A549 (cell line): ENCODE measurements at regions of chr19 and their contacts with region 1.

Region 1: DNA sequence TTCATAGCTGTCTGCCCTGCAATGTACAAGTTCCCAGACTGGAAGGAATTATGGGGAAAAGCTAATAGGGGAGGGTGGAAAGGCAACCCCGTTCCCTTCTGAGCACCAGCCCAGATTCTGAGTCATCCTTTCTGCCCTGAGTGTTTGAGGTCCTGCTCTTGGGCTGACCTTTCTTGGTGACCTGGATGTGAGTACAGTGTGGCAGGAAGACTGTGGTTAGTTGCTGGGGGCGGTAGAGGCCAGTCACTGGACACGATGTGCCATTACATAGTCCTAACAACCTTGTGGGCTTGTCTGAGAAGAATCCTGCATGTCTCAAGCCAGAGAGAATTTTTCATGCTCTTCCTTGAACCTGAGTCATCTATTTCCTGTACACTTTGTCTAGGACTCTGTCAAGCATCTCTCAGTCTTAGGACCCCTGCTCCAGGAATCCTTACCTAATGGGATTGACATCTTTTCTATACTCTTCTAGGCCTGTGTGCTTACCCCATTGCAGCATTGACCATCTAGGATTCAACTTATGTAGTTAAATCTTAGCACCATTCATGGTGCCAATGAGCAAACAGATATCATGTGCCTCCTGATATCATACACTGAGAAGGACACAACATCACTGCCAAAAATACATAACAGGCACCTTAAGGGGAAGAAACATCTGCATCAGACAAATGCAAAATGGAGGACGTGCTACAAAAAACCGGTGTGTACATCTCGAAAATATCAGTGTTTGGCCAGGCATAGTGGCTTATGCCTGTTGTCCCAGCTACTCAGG is 8.1 kb upstream of the ANGPTL4 start:
- DNase-seq: peak in 1 of 2 experiments; percentile 91
- ATAC-seq: peak; percentile 88 to 94
- H3K4me3 ChIP-seq: no peak overlapping the region
- H3K27ac ChIP-seq: peak overlapping the region; percentile 90 to 91
- H3K4me1 ChIP-seq: peaks cover 46% of the 10 kb centered on the region
- CTCF ChIP-seq: no peak
- EP300 ChIP-seq: no peak
- POLR2A ChIP-seq: no peak
- RAD21 ChIP-seq: peak; percentile 19 to 30; a peak in 2 of 5 replicates

Region 2: DNA sequence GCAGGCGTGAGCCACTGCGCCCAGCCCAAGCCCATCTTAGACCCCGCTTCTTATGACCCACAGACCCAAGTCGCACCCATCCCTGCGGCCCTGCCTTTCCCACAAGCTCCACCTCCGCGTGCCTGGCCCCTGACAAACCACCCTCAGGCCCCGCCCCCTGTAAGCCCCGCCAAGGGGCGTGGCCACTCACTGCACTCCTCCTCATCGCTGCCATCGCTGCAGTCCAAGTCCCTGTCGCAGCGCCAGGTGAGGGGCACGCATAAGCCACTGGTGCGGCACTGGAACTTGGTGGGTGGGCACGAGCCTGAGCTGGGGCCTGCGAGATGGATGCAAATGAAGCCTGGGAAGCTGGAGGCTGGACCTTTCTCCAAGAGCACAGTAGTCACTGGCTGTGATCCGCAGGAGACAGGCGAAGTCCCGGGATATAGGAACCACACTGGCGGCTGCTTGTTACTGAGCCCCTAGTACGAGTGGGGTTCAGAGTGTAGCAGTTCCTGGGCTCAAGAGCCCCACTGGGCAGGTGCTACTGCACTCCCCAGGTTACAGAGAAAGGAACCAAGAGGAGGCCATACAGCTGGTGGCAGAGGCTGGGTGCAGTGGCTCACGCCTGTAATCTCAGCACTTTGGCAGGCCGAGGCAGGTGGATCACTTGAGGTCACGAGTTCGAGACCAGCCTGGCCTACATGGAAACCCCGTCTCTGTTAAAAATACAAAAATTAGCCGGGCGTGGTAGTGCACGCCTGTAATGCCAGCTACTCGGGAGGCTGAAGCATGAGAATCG is 50.8 kb before region 1 on chr19:
- CTCF ChIA-PET with region 1: no interaction called
- POLR2A ChIA-PET with region 1: no interaction called
- DNase-seq: no peak
- ATAC-seq: no peak
- H3K4me3 ChIP-seq: no peak overlapping the region
- H3K27ac ChIP-seq: no peak overlapping the region
- H3K4me1 ChIP-seq: peaks cover 20% of the 10 kb centered on the region
- CTCF ChIP-seq: no peak
- EP300 ChIP-seq: no peak
- POLR2A ChIP-seq: no peak
- RAD21 ChIP-seq: no peak

Region 3: GRCh38 chr19:8342684-8343482 is 12.9 kb before region 1 on chr19 and contains the start of gene KANK3:
- CTCF ChIA-PET with region 1: interaction called, 43 read pairs
- POLR2A ChIA-PET with region 1: no interaction called
- DNase-seq: peak; percentile 94 to 97
- ATAC-seq: peak; percentile 99
- H3K4me3 ChIP-seq: peak within 1 kb of the TSS; percentile 44
- H3K27ac ChIP-seq: peak within 1 kb of the TSS; percentile 30 to 80; a peak in 4 of 6 replicates
- H3K4me1 ChIP-seq: peaks cover 4% of the 10 kb centered on the region; the same call in 2 of the 3 replicates
- CTCF ChIP-seq: no peak
- EP300 ChIP-seq: no peak
- POLR2A ChIP-seq: no peak
- RAD21 ChIP-seq: no peak
- polyA plus RNA-seq, gene KANK3: 1.0 and 1.2 TPM in 2 replicates

Region 4: DNA sequence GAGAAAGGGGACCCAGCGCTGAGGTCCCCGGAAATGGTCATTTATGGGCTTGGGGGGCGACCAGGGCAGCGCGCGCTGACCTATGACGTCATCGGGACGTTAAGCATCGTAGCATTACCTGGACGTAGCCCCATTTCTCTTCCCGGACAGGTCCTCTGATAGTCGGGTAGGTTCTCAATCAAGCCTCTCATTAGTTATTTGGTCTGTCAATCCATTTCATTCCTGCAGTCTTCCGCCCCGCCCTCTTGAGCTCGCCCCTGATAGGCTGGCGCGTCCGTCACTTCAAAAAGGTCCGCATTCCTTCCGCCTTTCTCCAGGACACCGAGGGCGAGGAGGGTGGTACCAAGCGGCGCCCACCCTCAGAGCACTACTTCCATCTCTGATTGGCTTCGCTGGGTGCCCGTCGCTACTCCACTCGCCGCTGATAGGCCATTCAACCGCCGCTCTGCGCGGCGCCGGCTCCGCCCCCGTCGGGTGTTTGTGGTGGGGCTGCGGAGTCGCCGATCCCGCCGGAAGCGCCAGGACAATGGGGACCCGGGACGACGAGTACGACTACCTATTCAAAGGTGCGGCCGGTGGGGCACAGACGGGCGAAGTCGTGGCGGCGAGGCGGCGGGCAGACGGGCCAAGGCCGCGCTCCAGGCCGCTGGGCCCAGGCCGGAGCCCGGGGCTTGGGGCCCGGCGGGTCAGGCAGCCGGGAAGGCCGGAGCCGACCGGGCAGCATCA is 34.2 kb after region 1 on chr19 and contains the start of gene RAB11B:
- CTCF ChIA-PET with region 1: interaction called, 71 read pairs
- POLR2A ChIA-PET with region 1: interaction called, 4 read pairs
- DNase-seq: peak; percentile 97 to 100
- ATAC-seq: peak; percentile 93
- H3K4me3 ChIP-seq: peak within 1 kb of the TSS; percentile 98
- H3K27ac ChIP-seq: peak within 1 kb of the TSS; percentile 100
- H3K4me1 ChIP-seq: peaks cover 59% of the 10 kb centered on the region
- CTCF ChIP-seq: no peak
- EP300 ChIP-seq: no peak
- POLR2A ChIP-seq: peak; percentile 18; the same call in 1 of the 2 replicates
- RAD21 ChIP-seq: no peak
- polyA plus RNA-seq, gene RAB11B: 22.3 and 25.1 TPM in 2 replicates

Region 5: DNA sequence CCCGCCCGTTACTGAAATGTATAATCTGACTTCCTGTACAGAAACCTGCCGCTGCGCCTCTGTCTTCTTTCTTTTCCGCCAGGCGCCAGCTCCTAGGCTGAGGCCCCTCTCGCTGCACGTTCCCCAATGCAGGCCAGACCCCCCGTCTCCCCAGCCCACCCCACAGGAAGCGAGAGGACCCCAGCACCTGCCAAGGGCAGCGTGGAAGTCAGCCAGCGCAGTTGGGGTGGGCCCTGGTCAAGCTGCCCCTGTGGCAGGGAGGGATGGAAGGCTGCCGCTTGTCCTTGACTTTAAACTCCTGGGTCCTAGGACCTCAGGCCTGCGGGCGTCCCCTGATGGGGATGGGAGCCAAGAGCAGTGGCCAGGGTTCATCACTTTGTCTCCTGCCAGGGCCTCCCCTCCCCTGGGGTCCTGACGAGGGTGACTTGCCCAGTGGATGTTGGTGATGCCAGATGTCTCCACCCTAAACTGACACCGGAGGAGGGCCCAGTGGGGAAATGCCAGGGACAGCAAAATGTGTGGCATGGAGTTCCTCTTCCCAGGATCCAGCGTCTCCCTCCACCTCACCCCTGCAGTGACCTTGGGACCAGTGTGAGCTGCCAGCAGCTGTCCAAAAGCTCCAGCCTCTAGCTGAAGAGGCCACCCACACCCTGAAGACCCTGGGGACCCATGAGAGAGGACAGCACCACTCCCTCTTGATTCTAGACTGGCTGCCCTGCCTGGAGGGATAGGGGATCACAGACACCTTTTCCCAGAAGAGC is 48.8 kb after region 1 on chr19:
- CTCF ChIA-PET with region 1: interaction called, 15 read pairs
- POLR2A ChIA-PET with region 1: no interaction called
- DNase-seq: no peak
- ATAC-seq: no peak
- H3K4me3 ChIP-seq: no peak overlapping the region
- H3K27ac ChIP-seq: no peak overlapping the region
- H3K4me1 ChIP-seq: no peaks in the 10 kb centered on the region
- CTCF ChIP-seq: no peak
- EP300 ChIP-seq: no peak
- POLR2A ChIP-seq: no peak
- RAD21 ChIP-seq: no peak

Region 6: DNA sequence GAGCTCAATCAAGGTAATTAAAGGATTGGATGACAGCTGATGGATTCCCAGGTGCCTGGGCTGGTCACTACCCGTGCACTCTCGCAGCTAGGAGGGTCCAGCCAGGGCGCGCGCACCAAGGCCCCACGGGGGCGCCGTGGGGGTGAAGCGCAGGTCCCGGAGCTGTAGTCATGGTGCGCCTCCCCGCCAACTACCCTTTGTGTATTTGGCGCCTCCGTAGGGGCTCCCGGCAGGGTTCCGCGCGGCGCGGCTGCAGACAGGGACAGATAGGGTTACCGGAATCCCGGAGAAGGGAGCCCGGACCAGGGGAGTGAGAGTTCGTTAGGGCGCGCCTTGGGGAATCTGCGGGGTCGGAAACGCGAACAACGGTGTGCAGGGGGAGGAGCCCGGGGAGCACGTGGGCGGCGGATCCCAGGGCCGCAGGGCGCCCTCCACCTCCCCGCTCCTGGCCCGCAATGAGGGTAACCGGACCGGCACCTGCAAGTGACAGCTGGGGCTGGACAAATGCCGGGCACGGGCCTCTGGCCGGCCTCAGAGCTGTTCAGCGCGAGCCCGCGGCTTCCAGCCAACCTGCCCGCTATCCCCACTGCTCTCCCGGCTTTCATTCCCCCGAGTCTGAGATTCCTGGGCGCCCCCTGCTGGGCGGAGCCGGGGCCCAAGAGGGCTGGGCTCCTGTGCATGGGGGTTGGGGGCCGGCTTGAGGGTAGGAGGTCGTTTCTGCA is 150.0 kb after region 1 on chr19:
- CTCF ChIA-PET with region 1: interaction called, 26 read pairs
- POLR2A ChIA-PET with region 1: no interaction called
- DNase-seq: peak; percentile 71 to 81
- ATAC-seq: peak; percentile 86 to 91
- H3K4me3 ChIP-seq: peak overlapping the region; percentile 61
- H3K27ac ChIP-seq: peak overlapping the region; percentile 87 to 99
- H3K4me1 ChIP-seq: peaks cover 10% of the 10 kb centered on the region; the same call in 2 of the 3 replicates
- CTCF ChIP-seq: peak; percentile 73
- EP300 ChIP-seq: no peak
- POLR2A ChIP-seq: no peak
- RAD21 ChIP-seq: peak; percentile 69 to 76